Activated CD8-positive, alpha-beta T cell treated with anti-CD3 and anti-CD28 coated beads, Interleukin-2, amount 10 ng/mL, durations not matched to agents 7 days and 5 days (primary cell): ENCODE measurements at regions of chr22 and their contacts with region 1.

Region 1: GRCh38 chr22:37334859-37335805 is 52.8 kb downstream of the CYTH4 start:
- DNase-seq: no peak
- ATAC-seq: no peak
- H3K4me3 Mint-ChIP-seq: no peak overlapping the region
- H3K27ac Mint-ChIP-seq: no peak overlapping the region
- H3K4me1 Mint-ChIP-seq: peaks cover 7% of the 10 kb centered on the region
- H3K27me3 Mint-ChIP-seq: peaks cover 56% of the 10 kb centered on the region

Region 2: GRCh38 chr22:37316875-37317371 is 18.2 kb before region 1 on chr22:
- CTCF ChIA-PET with region 1: interaction called, 17 read pairs
- POLR2A ChIA-PET with region 1: no interaction called
- DNase-seq: peak; percentile 84
- ATAC-seq: peak; percentile 85
- H3K4me3 Mint-ChIP-seq: no peak overlapping the region
- H3K27ac Mint-ChIP-seq: peak overlapping the region; percentile 30
- H3K4me1 Mint-ChIP-seq: peaks cover 47% of the 10 kb centered on the region
- H3K27me3 Mint-ChIP-seq: peaks cover 7% of the 10 kb centered on the region

Region 3: GRCh38 chr22:37479196-37479595 is 144.1 kb after region 1 on chr22:
- CTCF ChIA-PET with region 1: no interaction called
- POLR2A ChIA-PET with region 1: no interaction called
- DNase-seq: no peak
- ATAC-seq: no peak
- H3K4me3 Mint-ChIP-seq: no peak overlapping the region
- H3K27ac Mint-ChIP-seq: no peak overlapping the region
- H3K4me1 Mint-ChIP-seq: peaks cover 48% of the 10 kb centered on the region
- H3K27me3 Mint-ChIP-seq: no peaks in the 10 kb centered on the region